ENCODE measurements at regions of chr1 and their contacts with region 1.

Region 1: GRCh38 chr1:85339671-85340399 is 63.4 kb upstream of the BCL10 start:
- DNase-seq: no peak
- ATAC-seq: no peak

Region 2: GRCh38 chr1:84907095-84907827 is 432.6 kb before region 1 on chr1:
- intact Hi-C with region 1: no loop called
- DNase-seq: no peak
- ATAC-seq: no peak

Region 3: GRCh38 chr1:85188530-85188929 is 151.3 kb before region 1 on chr1:
- intact Hi-C with region 1: no loop called
- DNase-seq: no peak
- ATAC-seq: no peak

Region 4: DNA sequence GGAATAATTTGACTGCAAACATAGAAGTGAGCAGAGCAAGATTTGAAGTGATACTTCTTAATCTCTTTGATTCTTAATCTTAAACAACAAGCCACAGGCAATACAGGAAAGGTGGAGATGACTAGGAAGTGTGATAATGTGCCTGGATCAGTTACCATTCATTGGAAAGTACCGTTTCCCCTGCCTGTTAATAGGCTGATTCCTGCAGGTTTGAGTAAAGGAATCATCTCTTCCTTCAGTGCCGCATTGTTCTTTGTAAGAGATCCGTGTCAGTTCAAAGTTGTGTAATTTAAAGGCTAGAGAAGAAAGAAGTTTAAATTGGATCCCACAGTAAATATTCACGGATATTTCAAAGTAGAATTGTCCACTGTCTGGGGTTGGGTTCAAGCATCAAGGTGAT is 19.9 kb before region 1 on chr1:
- intact Hi-C with region 1: loop called (anchors 2 kb)
- DNase-seq: no peak
- ATAC-seq: no peak

Region 5: DNA sequence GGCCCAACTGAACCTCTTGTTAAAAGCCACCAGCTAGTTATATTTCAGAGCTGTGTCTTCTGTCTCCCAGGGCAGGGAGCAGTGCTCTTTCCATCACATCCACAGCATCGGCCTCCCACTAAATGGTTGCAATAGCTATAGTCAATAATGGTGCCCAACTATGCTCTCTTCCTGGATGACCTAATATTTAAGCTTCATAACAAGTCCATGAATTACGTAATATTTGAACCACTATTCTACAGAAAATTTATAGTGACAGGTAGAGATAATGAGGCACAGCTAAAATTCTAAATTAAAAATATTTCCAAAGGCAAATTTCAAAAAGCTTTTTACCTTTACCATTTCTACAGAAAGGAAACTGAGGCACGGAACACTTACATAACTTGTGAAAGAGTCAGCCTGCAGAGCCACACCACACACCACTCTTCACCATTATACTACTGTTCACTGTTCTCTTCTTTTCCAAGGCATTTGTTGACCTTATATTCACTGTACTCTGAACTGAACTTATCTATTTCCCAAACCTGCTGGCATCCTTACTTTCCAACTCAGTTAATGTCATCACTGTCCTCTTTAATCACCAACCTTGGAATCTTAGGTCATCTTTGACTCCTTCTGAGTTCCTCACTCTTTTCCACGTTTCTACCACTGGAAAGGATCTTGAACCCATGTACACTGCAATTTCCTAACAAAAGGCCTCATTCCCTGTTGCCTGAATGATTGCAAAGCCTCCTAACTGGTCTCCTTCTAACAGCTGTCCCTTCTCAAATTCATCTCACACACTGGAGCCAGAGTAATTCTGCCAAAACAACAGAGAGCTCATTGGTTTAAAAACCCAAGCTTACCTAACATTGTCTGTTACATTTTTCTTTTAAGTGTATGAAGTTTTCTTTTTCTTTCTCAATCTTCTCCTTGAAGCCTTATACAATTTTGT is 39.6 kb after region 1 on chr1:
- intact Hi-C with region 1: no loop called
- DNase-seq: no peak
- ATAC-seq: peak; percentile 50

Measured in Right ventricle myocardium inferior (tissue), 1 donor.